Activated naive CD4-positive, alpha-beta T cell treated with anti-CD3 and anti-CD28 coated beads for 36 hours (primary cell): ENCODE measurements at regions of chr12 and their contacts with region 1.

Region 1: DNA sequence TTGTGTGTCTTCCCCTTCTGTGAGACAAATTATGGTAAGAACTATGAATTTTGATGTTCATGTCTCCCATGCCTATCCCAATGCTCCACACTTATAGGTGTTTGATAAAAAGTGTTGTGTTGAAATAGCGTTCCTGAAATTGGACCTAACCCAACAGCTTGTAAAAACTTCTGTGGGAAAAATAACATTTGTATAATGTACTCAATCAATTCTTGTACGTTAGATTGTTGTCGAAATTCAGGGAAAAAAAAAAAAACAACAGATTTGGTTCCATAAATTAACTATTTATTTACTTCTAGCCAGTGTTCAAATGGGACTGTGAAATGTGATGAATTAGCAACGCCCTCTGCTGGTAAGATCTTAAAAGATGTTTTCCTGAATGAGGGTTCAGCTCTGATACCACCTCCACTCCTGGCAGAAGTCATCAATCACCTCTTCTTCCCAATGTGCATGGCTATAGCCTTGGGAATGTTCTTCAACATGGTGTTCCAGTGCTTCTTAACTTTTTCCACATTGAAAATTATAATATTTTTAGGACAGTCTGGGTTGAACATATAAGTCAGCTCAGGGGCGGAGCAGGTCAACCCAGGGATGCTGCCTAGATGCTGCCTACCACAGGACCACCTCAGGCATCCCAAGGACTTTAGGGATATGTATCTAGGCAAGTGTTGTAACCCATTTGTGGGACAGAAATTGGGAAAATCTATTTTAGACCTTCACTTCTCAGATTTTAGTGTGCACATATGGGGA is 170.6 kb downstream of the OTOGL start:
- DNase-seq: no peak
- H3K4me3 Mint-ChIP-seq: no peak overlapping the region
- H3K27ac Mint-ChIP-seq: no peak overlapping the region
- H3K4me1 Mint-ChIP-seq: no peaks in the 10 kb centered on the region
- H3K27me3 Mint-ChIP-seq: peaks cover 10% of the 10 kb centered on the region

Region 2: DNA sequence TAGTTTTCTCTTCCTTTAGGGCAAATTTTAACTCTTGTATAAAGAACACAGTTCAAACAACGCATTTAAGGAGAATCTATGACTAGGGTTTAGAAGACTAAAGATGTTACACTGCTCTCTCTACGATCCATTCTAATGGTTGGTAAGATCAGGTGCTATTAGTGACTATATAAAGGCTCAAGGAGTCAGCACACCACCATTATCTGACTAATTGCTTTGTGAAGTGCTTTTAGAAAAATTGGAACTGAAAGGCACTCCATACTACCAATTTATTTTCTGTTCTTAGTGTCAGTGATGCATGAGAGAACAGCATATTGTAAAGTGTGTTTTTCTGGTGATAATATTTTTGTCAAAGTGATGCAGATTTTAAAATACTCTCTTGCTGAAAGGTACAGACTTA is 1268.6 kb before region 1 on chr12:
- CTCF ChIA-PET with region 1: no interaction called
- intact Hi-C with region 1: no loop called
- DNase-seq: no peak
- H3K4me3 Mint-ChIP-seq: no peak overlapping the region
- H3K27ac Mint-ChIP-seq: no peak overlapping the region
- H3K4me1 Mint-ChIP-seq: no peaks in the 10 kb centered on the region
- H3K27me3 Mint-ChIP-seq: no peaks in the 10 kb centered on the region

Region 3: GRCh38 chr12:79547735-79548609 is 722.0 kb before region 1 on chr12:
- CTCF ChIA-PET with region 1: no interaction called
- intact Hi-C with region 1: loop called (anchors 2 kb)
- DNase-seq: peak; percentile 45
- H3K4me3 Mint-ChIP-seq: no peak overlapping the region
- H3K27ac Mint-ChIP-seq: no peak overlapping the region
- H3K4me1 Mint-ChIP-seq: no peaks in the 10 kb centered on the region
- H3K27me3 Mint-ChIP-seq: no peaks in the 10 kb centered on the region

Region 4: DNA sequence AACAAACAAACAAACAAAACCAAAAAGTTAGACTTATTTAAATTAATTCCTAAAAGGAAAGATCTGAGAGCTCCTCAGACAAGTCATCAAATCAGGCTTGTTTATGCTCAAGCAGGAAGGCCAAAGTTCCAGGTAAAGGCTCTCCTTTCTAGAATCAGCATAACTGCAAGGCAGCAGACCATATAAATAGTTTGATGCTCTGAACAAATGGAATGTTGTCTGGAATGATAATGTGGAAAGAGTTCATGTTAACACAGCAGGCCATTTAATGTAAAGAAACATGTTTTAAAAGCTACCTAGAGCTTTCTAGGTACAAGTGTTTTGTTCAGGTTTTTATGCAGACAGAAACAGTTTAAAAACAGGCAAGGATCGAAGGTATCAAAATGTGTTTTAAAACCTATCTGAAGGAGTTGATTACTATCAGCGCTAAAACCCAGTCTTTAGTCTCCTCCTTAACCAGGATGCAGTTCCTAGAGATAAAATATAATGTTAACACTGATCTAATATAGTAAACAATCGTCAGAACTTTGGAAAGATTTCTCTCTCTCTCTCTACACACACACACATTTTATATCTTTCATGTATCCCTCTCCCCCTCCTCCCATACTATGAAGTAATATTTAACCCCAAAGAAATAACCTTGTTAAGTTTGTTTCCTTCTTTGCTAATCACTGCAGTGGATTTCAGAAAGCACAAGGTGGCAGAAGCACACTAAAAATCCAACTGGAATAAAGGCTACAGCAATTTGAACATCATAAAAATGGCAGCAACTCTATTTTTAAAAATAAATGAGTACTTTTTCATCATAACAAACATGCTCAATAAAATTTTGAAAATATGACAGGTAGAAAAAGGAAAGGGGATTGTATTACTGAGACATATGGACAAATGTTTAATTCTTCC is 714.7 kb before region 1 on chr12:
- CTCF ChIA-PET with region 1: no interaction called
- intact Hi-C with region 1: loop called (anchors 2 kb)
- DNase-seq: peak; percentile 11
- H3K4me3 Mint-ChIP-seq: no peak overlapping the region
- H3K27ac Mint-ChIP-seq: no peak overlapping the region
- H3K4me1 Mint-ChIP-seq: no peaks in the 10 kb centered on the region
- H3K27me3 Mint-ChIP-seq: no peaks in the 10 kb centered on the region

Region 5: DNA sequence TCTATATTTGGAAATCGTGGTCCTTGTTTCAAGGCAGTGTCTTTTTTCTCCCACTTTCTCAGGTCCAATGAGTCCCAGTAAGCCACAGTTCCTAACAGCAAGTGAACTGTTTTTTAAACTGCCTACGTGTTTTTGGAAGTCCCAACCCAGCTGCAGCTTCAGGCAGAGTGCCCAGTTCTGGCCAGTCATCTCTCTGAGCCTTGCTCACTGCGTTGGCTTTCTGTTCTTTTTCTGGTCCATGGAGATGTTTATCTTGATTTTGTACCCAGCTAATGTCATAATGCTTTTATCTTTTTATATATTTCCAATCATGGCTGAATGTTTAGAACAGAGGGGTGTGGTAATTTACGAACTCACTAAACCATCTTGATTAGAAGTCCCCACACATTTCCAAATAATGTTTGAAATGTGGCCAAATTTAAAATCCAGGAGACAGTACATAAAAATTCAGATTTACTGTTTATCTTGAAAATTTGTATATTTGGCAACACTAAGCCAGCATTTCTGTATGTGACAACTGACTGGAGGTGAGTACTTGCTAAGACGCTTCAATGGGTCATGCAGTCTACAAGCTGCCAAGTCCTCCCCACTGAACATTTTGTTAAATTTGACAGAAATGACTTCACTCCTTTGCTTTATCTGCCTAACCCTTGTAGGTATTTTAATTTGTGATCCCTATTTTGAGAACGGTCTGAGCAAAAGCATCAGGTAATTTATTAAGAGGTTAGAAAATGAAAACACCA is 216.8 kb before region 1 on chr12:
- CTCF ChIA-PET with region 1: no interaction called
- intact Hi-C with region 1: loop called (anchors 5 kb)
- DNase-seq: no peak
- H3K4me3 Mint-ChIP-seq: no peak overlapping the region
- H3K27ac Mint-ChIP-seq: no peak overlapping the region
- H3K4me1 Mint-ChIP-seq: peaks cover 4% of the 10 kb centered on the region
- H3K27me3 Mint-ChIP-seq: peaks cover 1% of the 10 kb centered on the region

Region 6: GRCh38 chr12:80192087-80192486 is 77.9 kb before region 1 on chr12:
- CTCF ChIA-PET with region 1: interaction called, 5 read pairs
- intact Hi-C with region 1: loop called (anchors 1 kb)
- DNase-seq: no peak
- H3K4me3 Mint-ChIP-seq: no peak overlapping the region
- H3K27ac Mint-ChIP-seq: no peak overlapping the region
- H3K4me1 Mint-ChIP-seq: no peaks in the 10 kb centered on the region
- H3K27me3 Mint-ChIP-seq: no peaks in the 10 kb centered on the region